ENCODE measurements at regions of chr10 and their contacts with region 1.

Region 1: GRCh38 chr10:73644015-73644743 is 2.9 kb upstream of the MYOZ1 start:
- DNase-seq: no peak
- H3K4me3 ChIP-seq: no peak overlapping the region
- CTCF ChIP-seq: peak in 1 of 3 donors; percentile 92
- POLR2A ChIP-seq: no peak

Region 2: DNA sequence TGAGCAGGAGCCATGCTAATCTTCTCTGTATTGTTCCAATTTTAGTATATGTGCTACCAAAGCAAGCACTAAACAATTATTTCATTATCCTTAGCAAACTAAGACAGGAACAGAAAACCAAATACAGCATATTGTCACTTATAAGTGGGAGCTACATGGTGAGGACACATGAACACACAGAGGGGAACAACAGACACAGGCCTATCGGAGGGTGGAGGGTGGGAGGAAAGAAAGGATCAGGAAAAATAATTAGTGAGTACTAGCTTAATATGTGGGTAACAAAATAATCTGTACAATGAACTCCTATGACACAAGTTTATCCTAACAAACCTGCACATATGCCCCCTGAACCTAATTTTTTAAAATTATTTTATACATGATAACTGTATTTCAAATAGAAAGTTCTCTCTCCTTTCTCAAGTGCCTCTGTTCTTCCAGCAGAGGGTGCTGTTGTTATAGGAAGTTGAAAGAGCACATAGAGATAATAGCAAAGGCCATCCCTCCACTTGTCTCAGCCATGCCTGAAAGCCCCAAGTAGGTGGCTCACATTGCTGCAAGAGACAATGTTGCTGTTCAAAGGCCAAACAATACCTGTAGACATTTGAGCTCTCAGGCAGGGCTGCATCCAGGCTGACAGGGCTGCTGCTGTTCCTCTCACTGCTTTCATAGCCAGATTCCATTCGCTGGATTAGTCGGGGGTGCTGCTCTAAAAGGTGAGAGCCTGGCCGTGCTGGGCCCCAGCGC is 114.9 kb before region 1 on chr10:
- intact Hi-C with region 1: loop called (anchors 5 kb)
- DNase-seq: peak in 1 of 2 donors; percentile 46
- H3K4me3 ChIP-seq: no peak overlapping the region
- CTCF ChIP-seq: peak in 1 of 3 donors; percentile 78
- POLR2A ChIP-seq: no peak